ENCODE measurements at regions of chr12 and their contacts with region 1.

Region 1: GRCh38 chr12:118480235-118480634 is 103.9 kb downstream of the SUDS3 start:
- DNase-seq: no peak
- ATAC-seq: no peak
- H3K4me3 ChIP-seq: no peak overlapping the region
- H3K27ac ChIP-seq: no peak overlapping the region
- H3K4me1 ChIP-seq: no peaks in the 10 kb centered on the region
- H3K27me3 ChIP-seq: no peaks in the 10 kb centered on the region
- CTCF ChIP-seq: no peak
- POLR2A ChIP-seq: no peak
- RAD21 ChIP-seq: no peak

Region 2: GRCh38 chr12:118135788-118136558 is 344.3 kb before region 1 on chr12 and contains the start of gene PEBP1:
- CTCF ChIA-PET with region 1: no interaction called
- POLR2A ChIA-PET with region 1: no interaction called
- dilution Hi-C with region 1: no loop called
- in situ Hi-C with region 1: no loop called
- intact Hi-C with region 1: no loop called
- DNase-seq: peak; percentile 84
- ATAC-seq: peak; percentile 99
- H3K4me3 ChIP-seq: peak within 1 kb of the TSS; percentile 78
- H3K27ac ChIP-seq: peak within 1 kb of the TSS; percentile 42
- H3K4me1 ChIP-seq: peaks cover 2% of the 10 kb centered on the region; the same call in 1 of the 2 replicates
- H3K27me3 ChIP-seq: no peaks in the 10 kb centered on the region
- CTCF ChIP-seq: no peak
- POLR2A ChIP-seq: peak; percentile 67; the same call in 1 of the 2 replicates
- RAD21 ChIP-seq: no peak
- total RNA-seq, gene PEBP1: 129 and 137 TPM in 2 replicates

Region 3: DNA sequence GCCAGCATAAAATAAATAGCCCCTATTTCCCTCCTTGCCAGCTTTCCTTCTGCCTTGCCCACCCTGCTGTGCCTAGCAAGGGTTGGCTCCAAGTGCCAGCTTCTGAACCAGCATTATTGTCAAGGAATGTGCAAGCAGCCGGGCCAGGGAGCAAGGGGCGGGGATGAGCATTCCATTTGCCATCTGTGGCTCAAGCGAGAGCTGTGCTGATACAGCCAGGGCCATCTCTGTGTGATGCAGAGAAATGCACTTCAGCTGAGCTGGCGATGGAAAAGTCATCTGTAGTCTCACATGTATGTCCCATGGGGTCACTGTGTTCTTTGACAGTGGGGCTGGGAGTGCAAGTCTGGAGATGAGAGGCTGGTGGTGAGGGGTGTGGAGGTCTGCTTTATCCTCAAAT is 33.4 kb after region 1 on chr12:
- CTCF ChIA-PET with region 1: no interaction called
- POLR2A ChIA-PET with region 1: no interaction called
- dilution Hi-C with region 1: no loop called
- in situ Hi-C with region 1: no loop called
- intact Hi-C with region 1: loop called (anchors 1 kb)
- DNase-seq: no peak
- ATAC-seq: no peak
- H3K4me3 ChIP-seq: no peak overlapping the region
- H3K27ac ChIP-seq: no peak overlapping the region
- H3K4me1 ChIP-seq: no peaks in the 10 kb centered on the region
- H3K27me3 ChIP-seq: no peaks in the 10 kb centered on the region
- CTCF ChIP-seq: no peak
- POLR2A ChIP-seq: no peak
- RAD21 ChIP-seq: no peak

Region 4: DNA sequence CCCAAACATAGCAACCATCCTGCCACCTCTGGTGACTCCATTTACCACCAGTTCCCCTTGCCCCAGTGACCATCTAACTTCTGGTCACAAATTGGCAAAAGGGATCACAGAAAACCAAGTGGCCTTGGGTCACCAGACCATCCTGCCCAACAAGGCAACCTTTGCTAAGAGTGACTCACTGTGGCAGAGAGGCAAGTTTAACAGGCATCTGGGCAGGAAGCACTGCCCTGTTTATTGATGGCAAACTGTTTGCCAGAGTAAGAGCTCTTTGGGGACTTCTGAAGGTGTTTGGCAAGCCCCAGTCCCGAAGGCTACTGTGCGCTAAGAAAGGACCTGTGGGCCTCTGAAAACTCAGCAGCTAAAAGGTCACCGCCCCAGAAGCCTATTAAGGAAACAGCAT is 1085.2 kb after region 1 on chr12:
- CTCF ChIA-PET with region 1: no interaction called
- POLR2A ChIA-PET with region 1: no interaction called
- dilution Hi-C with region 1: no loop called
- in situ Hi-C with region 1: no loop called
- intact Hi-C with region 1: no loop called
- DNase-seq: no peak
- ATAC-seq: no peak
- H3K4me3 ChIP-seq: no peak overlapping the region
- H3K27ac ChIP-seq: no peak overlapping the region
- H3K4me1 ChIP-seq: no peaks in the 10 kb centered on the region
- H3K27me3 ChIP-seq: no peaks in the 10 kb centered on the region
- CTCF ChIP-seq: no peak
- POLR2A ChIP-seq: no peak
- RAD21 ChIP-seq: no peak

Measured in IMR-90 (cell line).